K562 (cell line): ENCODE measurements at regions of chr2 and their contacts with region 1.

Region 1: DNA sequence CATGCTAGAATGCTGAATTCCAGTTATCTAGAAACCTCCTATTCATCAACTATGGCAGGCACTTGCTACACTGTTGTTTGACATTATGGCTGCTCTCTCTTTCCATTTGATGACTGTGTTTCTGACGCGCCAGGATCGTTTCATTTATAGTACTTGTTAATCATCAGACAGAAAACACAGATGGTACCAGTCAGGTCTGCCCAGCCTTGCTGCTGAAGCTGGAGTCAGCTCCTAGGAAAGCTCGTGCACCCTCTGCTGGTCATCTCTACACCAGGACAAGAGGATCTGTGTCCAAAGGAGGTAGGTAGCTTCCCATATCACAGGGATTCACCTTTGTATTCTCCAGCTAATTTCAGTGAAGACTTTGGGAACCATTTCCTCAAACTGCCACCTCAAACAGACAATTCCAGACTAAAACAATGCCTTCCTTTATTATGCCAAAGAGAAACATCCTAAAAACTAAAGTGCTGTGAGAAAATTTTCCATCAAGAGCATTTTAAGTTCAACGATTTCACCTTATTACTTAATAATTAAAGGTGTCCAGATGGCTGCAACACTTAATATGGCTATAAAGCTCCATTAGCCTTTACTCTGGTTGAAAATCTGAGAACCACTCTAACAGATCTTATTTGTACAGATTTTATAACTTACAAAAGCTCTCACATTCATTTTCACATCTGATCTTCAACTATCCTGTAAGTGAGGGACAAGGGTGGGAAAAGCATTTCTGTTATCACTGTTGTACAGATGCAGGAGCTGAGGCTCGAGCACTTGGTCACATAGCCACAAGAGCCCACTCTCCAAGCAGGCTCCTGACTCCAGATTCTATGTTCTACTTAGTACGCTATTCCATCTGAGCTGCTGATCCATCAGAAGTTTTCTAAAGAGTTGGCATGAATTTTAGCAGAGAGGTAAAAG is 17.5 kb downstream of the METTL8 start:
- DNase-seq: peak; percentile 44 to 90 (median 64)
- ATAC-seq: peak; percentile 99
- H3K4me3 ChIP-seq: no peak overlapping the region
- H3K27ac ChIP-seq: no peak overlapping the region
- H3K4me1 ChIP-seq: peaks cover 0 to 16% of the 10 kb centered on the region in 2 experiments; a peak in 3 of 5 replicates
- H3K27me3 ChIP-seq: no peaks in the 10 kb centered on the region
- CTCF ChIP-seq: peak; percentile 86 to 93 (median 92)
- EP300 ChIP-seq: 0 out of 2 replicates have a peak, but pooled peaks have one; percentile 17
- POLR2A ChIP-seq: no peak
- RAD21 ChIP-seq: peak; percentile 90 to 96

Region 2: GRCh38 chr2:171086352-171087290 is 329.6 kb before region 1 on chr2:
- CTCF ChIA-PET with region 1: no interaction called
- POLR2A ChIA-PET with region 1: interaction called, 4 read pairs
- in situ Hi-C with region 1: no loop called
- intact Hi-C with region 1: loop called (anchors 10 kb)
- DNase-seq: peak; percentile 37 to 75 (median 58)
- ATAC-seq: peak; percentile 82
- H3K4me3 ChIP-seq: no peak overlapping the region
- H3K27ac ChIP-seq: peak overlapping the region; percentile 19; the same call in 1 of the 3 replicates
- H3K4me1 ChIP-seq: peaks cover 0 to 21% of the 10 kb centered on the region in 2 experiments; a peak in 2 of 5 replicates
- H3K27me3 ChIP-seq: no peaks in the 10 kb centered on the region
- CTCF ChIP-seq: peak; percentile 56 to 78 (median 70)
- EP300 ChIP-seq: peak; percentile 47; the same call in 1 of the 2 replicates
- POLR2A ChIP-seq: no peak
- RAD21 ChIP-seq: peak; percentile 53 to 54

Region 3: GRCh38 chr2:171253900-171254655 is 162.2 kb before region 1 on chr2:
- CTCF ChIA-PET with region 1: no interaction called
- POLR2A ChIA-PET with region 1: no interaction called
- in situ Hi-C with region 1: no loop called
- intact Hi-C with region 1: loop called (anchors 5 kb)
- DNase-seq: no peak
- ATAC-seq: peak; percentile 77
- H3K4me3 ChIP-seq: no peak overlapping the region
- H3K27ac ChIP-seq: no peak overlapping the region
- H3K4me1 ChIP-seq: no peaks in the 10 kb centered on the region
- H3K27me3 ChIP-seq: 0 out of 5 replicates have a peak, but pooled peaks cover 0 to 2% of the 10 kb centered on the region in 2 experiments
- CTCF ChIP-seq: peak in 1 of 3 experiments; percentile 16; a peak in 1 of 6 replicates
- EP300 ChIP-seq: no peak
- POLR2A ChIP-seq: no peak
- RAD21 ChIP-seq: no peak

Region 4: DNA sequence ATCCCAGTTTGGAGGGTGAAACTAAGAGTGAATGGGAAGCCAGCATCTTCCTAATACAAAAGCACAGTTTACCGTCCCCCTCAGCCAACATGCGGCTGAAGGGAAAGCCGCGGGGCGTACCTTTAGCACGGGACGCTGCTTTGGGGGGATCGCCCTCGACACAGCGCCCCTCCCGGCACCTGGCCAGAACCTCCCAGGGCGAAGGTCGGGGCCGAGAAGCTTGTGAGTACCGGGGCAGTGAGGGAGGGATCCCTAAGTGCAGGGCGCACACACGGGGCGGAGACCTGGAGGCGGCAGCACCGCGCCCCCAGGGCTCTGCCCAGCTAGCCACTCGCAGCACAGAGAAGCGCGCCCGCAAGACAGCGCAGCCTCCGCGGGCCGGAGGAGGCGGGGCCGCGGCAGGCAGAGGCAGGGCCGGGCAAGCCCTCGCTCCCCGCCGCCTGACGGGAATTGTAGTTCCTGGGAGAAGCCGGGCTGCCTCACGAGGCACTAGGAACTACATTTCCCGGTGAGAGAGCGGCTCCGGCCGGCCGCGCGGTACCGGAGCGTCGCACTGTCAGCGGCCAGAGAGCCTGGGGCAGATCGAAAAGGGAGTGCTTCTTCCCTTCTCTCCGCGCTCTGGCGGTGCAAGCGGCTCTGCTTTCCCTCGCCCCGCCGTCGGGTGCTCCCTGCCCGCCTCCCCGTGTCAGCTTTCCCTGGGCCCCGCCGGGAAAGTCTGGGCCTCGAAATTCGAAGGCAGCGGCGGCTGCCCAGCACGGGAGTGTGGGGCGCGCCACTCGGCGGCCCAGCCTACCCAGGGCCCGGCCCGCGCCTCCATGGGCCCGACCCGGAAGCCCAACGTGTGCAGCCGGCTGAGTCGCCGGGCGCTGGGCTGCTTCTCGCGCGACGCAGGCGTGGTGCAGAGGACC is 17.7 kb after region 1 on chr2 and contains the starts of genes DCAF17 and METTL8:
- CTCF ChIA-PET with region 1: no interaction called
- POLR2A ChIA-PET with region 1: interaction called, 15 read pairs
- in situ Hi-C with region 1: no loop called
- intact Hi-C with region 1: no loop called
- DNase-seq: peak; percentile 95 to 99 (median 96)
- ATAC-seq: peak; percentile 97
- H3K4me3 ChIP-seq: peak within 1 kb of the TSS; percentile 86
- H3K27ac ChIP-seq: peak within 1 kb of the TSS; percentile 94
- H3K4me1 ChIP-seq: peaks cover 13 to 18% of the 10 kb centered on the region in 2 experiments
- H3K27me3 ChIP-seq: no peaks in the 10 kb centered on the region
- CTCF ChIP-seq: peak; percentile 92 to 93 (median 92)
- EP300 ChIP-seq: peak; percentile 34; the same call in 1 of the 2 replicates
- POLR2A ChIP-seq: peak; percentile 96
- RAD21 ChIP-seq: peak; percentile 13 to 45; a peak in 3 of 4 replicates
- polyA plus RNA-seq, gene DCAF17: 10.0 to 12.0 TPM
- polyA plus RNA-seq, gene METTL8: 12.9 to 16.7 TPM

Region 5: DNA sequence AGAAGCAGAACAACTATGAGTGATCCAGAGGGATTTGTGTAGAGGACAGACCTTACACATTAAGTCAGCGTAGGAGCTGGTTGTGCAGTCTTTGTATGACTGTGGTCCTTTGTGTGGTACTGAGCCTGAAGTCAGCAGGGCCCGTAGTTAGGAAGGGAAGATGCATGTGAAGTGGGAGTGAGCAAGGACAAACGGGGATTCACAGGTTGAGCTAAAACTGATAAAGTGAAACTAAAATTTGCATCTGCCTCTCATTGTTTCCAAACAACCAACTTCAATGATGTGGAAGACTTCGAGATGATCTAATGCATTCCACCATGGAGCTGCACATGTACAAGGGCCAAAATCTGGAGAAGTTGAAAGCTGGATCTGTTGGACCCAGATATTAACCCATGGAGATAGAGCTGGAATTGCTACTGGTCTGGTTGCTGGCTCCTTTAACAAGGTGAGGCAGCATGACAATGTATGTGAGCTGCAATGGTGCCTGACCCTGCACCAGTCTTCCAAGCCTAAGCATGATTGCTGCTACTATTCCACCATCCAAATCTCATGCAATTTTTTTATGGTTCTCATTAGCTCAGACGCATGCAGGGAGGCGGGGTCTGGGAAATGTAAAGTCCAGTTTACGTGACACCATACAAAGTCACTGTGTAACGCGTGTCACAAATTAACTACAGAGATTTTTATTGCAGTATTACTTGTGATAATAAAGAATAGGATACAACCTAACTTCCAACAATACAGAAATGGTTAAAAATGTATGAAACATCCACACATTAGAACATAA is 93.9 kb after region 1 on chr2:
- CTCF ChIA-PET with region 1: no interaction called
- POLR2A ChIA-PET with region 1: no interaction called
- in situ Hi-C with region 1: no loop called
- intact Hi-C with region 1: no loop called
- DNase-seq: no peak
- ATAC-seq: no peak
- H3K4me3 ChIP-seq: no peak overlapping the region
- H3K27ac ChIP-seq: no peak overlapping the region
- H3K4me1 ChIP-seq: peaks cover 9 to 37% of the 10 kb centered on the region in 2 experiments; a peak in 3 of 5 replicates
- H3K27me3 ChIP-seq: no peaks in the 10 kb centered on the region
- CTCF ChIP-seq: no peak
- EP300 ChIP-seq: no peak
- POLR2A ChIP-seq: no peak
- RAD21 ChIP-seq: no peak

Region 6: DNA sequence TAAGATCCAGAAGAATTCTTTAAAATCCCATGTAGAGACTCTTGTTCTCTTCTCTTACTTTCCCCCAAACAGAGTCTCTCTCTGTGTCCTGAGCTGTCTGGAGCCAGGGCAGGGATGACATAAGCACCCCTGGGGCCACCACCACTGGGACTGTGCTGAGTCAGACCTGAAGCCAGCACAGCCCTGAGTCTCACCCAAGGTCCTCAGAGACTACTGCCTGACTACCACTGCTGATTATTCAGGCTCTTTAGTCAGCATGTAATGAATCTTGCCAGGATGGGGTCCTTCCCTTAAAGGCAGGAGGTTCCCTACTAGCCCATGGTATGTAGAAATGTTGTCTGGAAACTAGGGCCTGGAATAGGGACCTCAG is 236.1 kb after region 1 on chr2:
- CTCF ChIA-PET with region 1: no interaction called
- POLR2A ChIA-PET with region 1: no interaction called
- in situ Hi-C with region 1: no loop called
- intact Hi-C with region 1: no loop called
- DNase-seq: no peak
- ATAC-seq: no peak
- H3K4me3 ChIP-seq: no peak overlapping the region
- H3K27ac ChIP-seq: no peak overlapping the region
- H3K4me1 ChIP-seq: no peaks in the 10 kb centered on the region
- H3K27me3 ChIP-seq: no peaks in the 10 kb centered on the region
- CTCF ChIP-seq: no peak
- EP300 ChIP-seq: no peak
- POLR2A ChIP-seq: no peak
- RAD21 ChIP-seq: no peak